Sigmoid colon (tissue), 7 donors: ENCODE measurements at regions of chr9 and their contacts with region 1.

Region 1: GRCh38 chr9:107637421-107638420 is 148.2 kb upstream of the KLF4 start:
- DNase-seq: peak; percentile 99
- H3K4me3 ChIP-seq: peak overlapping the region; percentile 35 to 56 (median 50)
- H3K27ac ChIP-seq: peak overlapping the region; percentile 85 to 99 (median 97)
- H3K4me1 ChIP-seq: peaks cover 0 to 21% (median 18%) of the 10 kb centered on the region in 4 donors
- H3K27me3 ChIP-seq: no peaks in the 10 kb centered on the region
- CTCF ChIP-seq: peak in 2 of 4 experiments; percentile 23 to 48
- EP300 ChIP-seq: peak in 3 of 4 donors; percentile 35 to 85 (median 55)
- POLR2A ChIP-seq: peak; percentile 94 to 97

Region 2: DNA sequence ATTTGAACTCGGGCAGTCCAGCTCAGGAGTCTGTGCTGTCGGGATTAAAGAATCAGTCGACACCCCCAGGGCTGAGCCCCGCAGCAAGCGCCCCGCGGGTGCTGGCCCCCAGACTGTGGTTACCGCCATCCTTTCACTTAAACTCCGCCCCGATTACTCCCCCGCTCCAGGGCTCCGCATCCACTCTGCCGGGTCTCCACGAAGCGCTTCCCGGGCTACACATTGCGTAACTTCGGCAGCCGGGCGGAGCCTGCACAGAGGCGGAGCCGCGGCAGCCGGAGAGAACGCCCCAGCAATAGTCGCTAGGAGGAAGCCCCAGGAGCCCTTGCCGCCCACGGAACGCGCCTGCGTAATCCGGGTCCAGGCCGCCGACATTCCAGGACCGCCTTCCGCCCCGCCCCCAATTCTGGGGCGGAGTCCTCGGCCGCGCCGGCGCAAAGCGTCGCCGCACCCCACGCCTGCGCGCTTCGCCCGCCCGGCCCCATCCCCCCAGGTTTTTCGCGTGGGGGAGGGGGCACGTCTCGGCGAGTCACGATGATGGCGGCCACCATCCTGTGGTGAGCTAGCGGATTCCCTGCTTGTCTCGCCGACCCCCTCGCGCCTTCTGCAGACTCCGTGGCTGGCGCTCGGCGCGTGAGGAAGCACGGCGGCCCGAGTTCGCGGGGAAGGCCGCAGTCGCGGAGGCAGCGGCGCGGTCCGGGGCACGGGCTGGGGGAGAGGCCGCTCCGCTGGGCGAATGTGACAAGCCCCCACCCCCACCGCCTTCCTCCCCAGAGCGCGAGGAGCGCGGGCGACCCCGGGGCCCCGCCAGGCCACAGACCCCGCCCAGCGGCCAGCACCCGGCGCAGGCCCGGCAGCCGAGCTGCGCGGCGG is 354.7 kb before region 1 on chr9 and contains the start of gene RAD23B:
- intact Hi-C with region 1: loop called (anchors 10 kb)
- DNase-seq: peak; percentile 99
- H3K4me3 ChIP-seq: peak within 1 kb of the TSS; percentile 94 to 99 (median 96)
- H3K27ac ChIP-seq: peak within 1 kb of the TSS; percentile 99 to 100 (median 99)
- H3K4me1 ChIP-seq: peaks cover 0 to 45% (median 31%) of the 10 kb centered on the region in 4 donors
- H3K27me3 ChIP-seq: no peaks in the 10 kb centered on the region
- CTCF ChIP-seq: no peak
- EP300 ChIP-seq: peak in 2 of 4 donors; percentile 11 to 39
- POLR2A ChIP-seq: peak; percentile 74 to 81
- total RNA-seq, gene RAD23B: 61.9 to 74.3 (median 66.4) TPM

Region 3: DNA sequence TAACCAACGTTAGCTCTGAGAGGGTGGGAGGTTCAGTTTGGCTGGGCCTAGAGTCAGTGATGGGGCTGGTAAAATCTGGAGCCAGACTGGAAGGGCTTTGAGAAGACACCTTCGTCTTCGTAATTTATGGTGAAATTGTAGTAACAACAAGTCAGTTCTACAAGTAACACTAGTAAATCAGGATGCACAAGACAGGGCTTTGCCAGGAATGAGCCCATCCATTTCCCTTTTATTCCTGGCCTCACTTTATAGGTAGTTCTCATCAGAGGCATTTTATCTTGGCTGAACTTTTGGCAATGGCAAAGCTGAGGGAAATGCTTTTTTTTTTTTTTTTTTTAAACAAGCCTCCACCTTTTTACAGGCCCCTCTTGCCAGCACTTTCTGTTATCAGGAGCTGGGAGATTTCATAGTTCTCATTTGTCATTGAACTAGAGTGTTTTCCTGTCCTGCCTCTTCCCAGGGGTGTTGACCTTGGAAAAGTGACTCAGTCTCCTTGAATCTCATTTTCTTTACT is 37.6 kb before region 1 on chr9:
- intact Hi-C with region 1: no loop called
- DNase-seq: peak; percentile 71
- H3K4me3 ChIP-seq: no peak overlapping the region
- H3K27ac ChIP-seq: peak overlapping the region in 3 of 4 donors; percentile 33 to 56 (median 33)
- H3K4me1 ChIP-seq: peaks cover 0 to 8% (median 7%) of the 10 kb centered on the region in 4 donors
- H3K27me3 ChIP-seq: no peaks in the 10 kb centered on the region
- CTCF ChIP-seq: no peak
- EP300 ChIP-seq: peak in 1 of 4 donors; percentile 11
- POLR2A ChIP-seq: no peak

Region 4: GRCh38 chr9:107732781-107733522 is 95.2 kb after region 1 on chr9:
- intact Hi-C with region 1: loop called (anchors 5 kb)
- DNase-seq: peak; percentile 82
- H3K4me3 ChIP-seq: peak overlapping the region in 3 of 4 donors; percentile 10 to 22 (median 14)
- H3K27ac ChIP-seq: peak overlapping the region; percentile 70 to 81 (median 80)
- H3K4me1 ChIP-seq: peaks cover 0 to 38% (median 18%) of the 10 kb centered on the region in 4 donors
- H3K27me3 ChIP-seq: no peaks in the 10 kb centered on the region
- CTCF ChIP-seq: no peak
- EP300 ChIP-seq: peak in 1 of 4 donors; percentile 6
- POLR2A ChIP-seq: no peak

Region 5: DNA sequence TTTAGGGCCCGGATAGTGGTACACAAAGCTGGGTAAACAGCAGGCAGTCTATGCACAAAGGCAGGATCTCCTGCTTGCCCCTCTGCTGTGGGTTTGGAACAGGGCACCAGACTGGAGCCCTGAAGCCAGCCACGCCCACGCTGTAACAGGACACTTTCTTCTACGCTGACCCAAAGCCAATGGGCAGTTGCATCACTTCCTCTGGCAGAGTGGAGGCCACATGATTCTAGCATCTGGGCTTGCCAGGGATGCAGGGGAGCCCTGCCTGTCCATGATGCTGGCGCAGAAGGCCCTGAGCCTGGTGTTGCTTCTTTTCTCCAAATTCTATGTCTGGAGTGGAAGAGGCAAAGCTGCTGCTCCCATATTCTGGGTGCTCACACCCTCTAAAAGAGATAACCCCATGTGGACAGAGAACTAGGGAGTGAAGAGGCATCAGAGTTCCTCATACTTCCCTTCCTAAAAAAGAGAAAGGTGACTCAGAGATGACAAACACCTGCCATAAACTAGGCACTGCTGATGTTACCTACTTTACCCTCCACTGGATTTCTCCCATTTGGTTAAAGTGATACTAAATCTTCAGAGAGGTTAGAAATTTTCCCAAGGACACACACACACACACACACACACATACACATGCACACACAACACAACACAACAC is 112.2 kb after region 1 on chr9:
- intact Hi-C with region 1: loop called (anchors 1 kb)
- DNase-seq: peak; percentile 96
- H3K4me3 ChIP-seq: no peak overlapping the region
- H3K27ac ChIP-seq: peak overlapping the region; percentile 75 to 88 (median 83)
- H3K4me1 ChIP-seq: peaks cover 0 to 36% (median 34%) of the 10 kb centered on the region in 4 donors
- H3K27me3 ChIP-seq: no peaks in the 10 kb centered on the region
- CTCF ChIP-seq: no peak
- EP300 ChIP-seq: peak in 2 of 4 donors; percentile 29 to 56
- POLR2A ChIP-seq: no peak

Region 6: DNA sequence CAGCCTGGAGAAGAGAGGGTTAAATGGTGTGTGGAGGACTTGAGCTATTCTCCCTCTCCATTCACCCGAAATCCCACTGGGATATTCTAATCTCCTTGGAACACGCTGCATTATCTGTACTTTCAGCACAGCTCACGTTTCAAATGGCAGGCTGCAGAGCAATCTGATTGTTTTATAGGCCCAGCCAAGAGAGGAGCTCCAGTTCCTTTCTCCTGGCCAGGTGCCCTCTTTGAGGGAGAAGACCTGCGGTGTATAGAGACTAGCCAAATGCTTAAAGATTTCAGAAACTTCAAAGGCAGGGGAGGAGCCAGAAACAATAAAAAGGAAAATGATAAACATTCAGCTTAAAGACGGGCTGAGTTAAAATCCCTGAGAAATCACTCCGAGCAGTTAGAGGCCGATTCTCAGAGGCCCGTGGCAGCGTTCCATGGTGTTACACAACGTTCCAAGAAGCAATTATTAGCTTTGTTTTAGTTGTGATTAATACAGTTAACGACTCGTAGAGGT is 415.9 kb after region 1 on chr9:
- intact Hi-C with region 1: loop called (anchors 5 kb)
- DNase-seq: peak; percentile 92
- H3K4me3 ChIP-seq: no peak overlapping the region
- H3K27ac ChIP-seq: peak overlapping the region; percentile 59 to 77 (median 74)
- H3K4me1 ChIP-seq: peaks cover 0 to 68% (median 57%) of the 10 kb centered on the region in 4 donors
- H3K27me3 ChIP-seq: no peaks in the 10 kb centered on the region
- CTCF ChIP-seq: no peak
- EP300 ChIP-seq: peak in 2 of 4 donors; percentile 45 to 56
- POLR2A ChIP-seq: no peak

Region 7: GRCh38 chr9:108142504-108143201 is 504.9 kb after region 1 on chr9:
- intact Hi-C with region 1: loop called (anchors 2 kb)
- DNase-seq: peak; percentile 97
- H3K4me3 ChIP-seq: no peak overlapping the region
- H3K27ac ChIP-seq: peak overlapping the region; percentile 77 to 92 (median 84)
- H3K4me1 ChIP-seq: peaks cover 0 to 25% (median 24%) of the 10 kb centered on the region in 4 donors
- H3K27me3 ChIP-seq: no peaks in the 10 kb centered on the region
- CTCF ChIP-seq: peak in 1 of 4 experiments; percentile 51
- EP300 ChIP-seq: peak; percentile 34 to 97 (median 85)
- POLR2A ChIP-seq: no peak

Region 8: GRCh38 chr9:108565651-108566378 is 928.1 kb after region 1 on chr9:
- intact Hi-C with region 1: loop called (anchors 5 kb)
- DNase-seq: peak; percentile 72
- H3K4me3 ChIP-seq: no peak overlapping the region
- H3K27ac ChIP-seq: no peak overlapping the region
- H3K4me1 ChIP-seq: peaks cover 0 to 6% (median 2%) of the 10 kb centered on the region in 4 donors
- H3K27me3 ChIP-seq: no peaks in the 10 kb centered on the region
- CTCF ChIP-seq: peak; percentile 63 to 83 (median 78)
- EP300 ChIP-seq: no peak
- POLR2A ChIP-seq: no peak